Activated B cell treated with CpG ODN at 0.5 μM for 24 hours (primary cell): ENCODE measurements at regions of chr11 and their contacts with region 1.

Region 1: GRCh38 chr11:111446404-111447111 is 65.6 kb downstream of the BTG4 start:
- DNase-seq: peak; percentile 55
- ATAC-seq: peak; percentile 95
- H3K4me3 Mint-ChIP-seq: no peak overlapping the region
- H3K27ac Mint-ChIP-seq: peak overlapping the region; percentile 43
- H3K4me1 Mint-ChIP-seq: peaks cover 36% of the 10 kb centered on the region
- H3K27me3 Mint-ChIP-seq: peaks cover 2% of the 10 kb centered on the region
- CTCF ChIP-seq: no peak

Region 2: DNA sequence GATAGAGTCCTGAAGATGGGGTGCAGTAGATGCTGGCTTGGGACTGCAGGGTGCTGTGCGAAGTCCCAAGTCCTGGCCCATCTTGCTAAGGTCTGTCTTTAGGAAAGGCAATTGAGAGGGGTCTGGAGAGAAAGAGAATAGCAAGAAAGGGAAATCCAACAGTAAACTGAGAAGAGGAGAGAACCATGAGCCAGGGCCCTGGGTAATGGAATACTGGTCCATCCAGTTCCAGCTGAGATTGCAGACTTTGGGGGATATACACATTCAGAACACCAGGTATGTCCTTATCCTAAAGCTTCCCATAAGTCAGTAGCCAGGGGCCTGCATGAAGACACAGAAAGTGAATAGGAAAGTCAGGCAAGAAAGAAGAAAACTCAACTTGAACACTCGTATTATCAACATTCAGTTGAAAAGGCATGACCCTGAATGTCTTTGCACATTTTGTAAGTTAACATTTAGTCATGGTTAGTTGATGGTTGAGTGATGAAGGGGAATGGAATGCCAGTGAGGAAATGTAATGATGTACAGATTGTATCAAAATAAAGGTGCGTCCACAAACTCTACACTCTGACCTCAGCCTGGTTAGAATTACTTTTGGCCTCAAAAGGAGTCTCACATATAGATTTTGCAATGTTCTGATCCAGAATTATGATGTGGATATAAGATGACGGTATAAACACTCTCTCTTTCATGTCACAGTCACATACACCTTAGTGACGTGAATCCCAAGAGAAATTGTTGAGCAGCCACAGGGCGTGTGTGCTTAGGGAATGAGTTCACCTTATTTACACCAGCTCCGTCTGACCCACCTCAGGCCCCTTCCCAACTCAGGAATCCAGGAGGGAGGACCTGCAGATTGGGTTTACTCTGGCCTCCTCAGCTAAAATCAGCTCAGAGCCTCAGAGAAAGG is 1250.5 kb before region 1 on chr11:
- CTCF ChIA-PET with region 1: no interaction called
- POLR2A ChIA-PET with region 1: no interaction called
- intact Hi-C with region 1: loop called (anchors 1 kb)
- DNase-seq: no peak
- ATAC-seq: no peak
- H3K4me3 Mint-ChIP-seq: no peak overlapping the region
- H3K27ac Mint-ChIP-seq: no peak overlapping the region
- H3K4me1 Mint-ChIP-seq: peaks cover 11% of the 10 kb centered on the region
- H3K27me3 Mint-ChIP-seq: peaks cover 23% of the 10 kb centered on the region
- CTCF ChIP-seq: no peak

Region 3: GRCh38 chr11:110434952-110435779 is 1011.4 kb before region 1 on chr11:
- CTCF ChIA-PET with region 1: interaction called, 14 read pairs
- POLR2A ChIA-PET with region 1: no interaction called
- intact Hi-C with region 1: loop called (anchors 1 kb)
- DNase-seq: no peak
- ATAC-seq: no peak
- H3K4me3 Mint-ChIP-seq: no peak overlapping the region
- H3K27ac Mint-ChIP-seq: no peak overlapping the region
- H3K4me1 Mint-ChIP-seq: peaks cover 41% of the 10 kb centered on the region
- H3K27me3 Mint-ChIP-seq: no peaks in the 10 kb centered on the region
- CTCF ChIP-seq: no peak

Region 4: DNA sequence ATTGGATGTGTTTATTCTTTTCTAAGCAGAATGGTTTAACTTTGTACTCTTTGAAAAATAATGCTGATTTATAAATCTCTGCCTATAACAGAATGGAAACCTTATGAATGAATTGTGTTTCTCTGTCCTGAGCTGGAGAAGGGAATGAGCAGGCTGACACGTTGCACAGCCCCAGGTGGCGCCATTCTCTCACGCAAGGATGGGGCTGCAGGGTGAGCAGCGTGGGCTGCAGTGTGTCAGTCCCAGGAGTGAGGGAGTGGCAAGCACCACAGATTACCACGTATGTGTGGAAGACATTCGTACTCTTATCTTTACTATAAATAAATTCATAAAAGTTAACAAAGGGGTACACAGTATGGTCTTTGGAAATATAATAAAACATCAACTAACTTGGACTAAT is 983.4 kb before region 1 on chr11:
- CTCF ChIA-PET with region 1: interaction called, 5 read pairs
- POLR2A ChIA-PET with region 1: no interaction called
- intact Hi-C with region 1: loop called (anchors 1 kb)
- DNase-seq: no peak
- ATAC-seq: peak; percentile 61
- H3K4me3 Mint-ChIP-seq: no peak overlapping the region
- H3K27ac Mint-ChIP-seq: no peak overlapping the region
- H3K4me1 Mint-ChIP-seq: no peaks in the 10 kb centered on the region
- H3K27me3 Mint-ChIP-seq: no peaks in the 10 kb centered on the region
- CTCF ChIP-seq: no peak

Region 5: GRCh38 chr11:111166598-111166997 is 280.0 kb before region 1 on chr11:
- CTCF ChIA-PET with region 1: no interaction called
- POLR2A ChIA-PET with region 1: no interaction called
- intact Hi-C with region 1: no loop called
- DNase-seq: no peak
- ATAC-seq: no peak
- H3K4me3 Mint-ChIP-seq: no peak overlapping the region
- H3K27ac Mint-ChIP-seq: no peak overlapping the region
- H3K4me1 Mint-ChIP-seq: peaks cover 2% of the 10 kb centered on the region
- H3K27me3 Mint-ChIP-seq: no peaks in the 10 kb centered on the region
- CTCF ChIP-seq: no peak

Region 6: GRCh38 chr11:111429066-111429506 is 17.5 kb before region 1 on chr11:
- CTCF ChIA-PET with region 1: interaction called, 42 read pairs
- POLR2A ChIA-PET with region 1: interaction called, 4 read pairs
- intact Hi-C with region 1: loop called (anchors 2 kb)
- DNase-seq: no peak
- ATAC-seq: peak; percentile 91
- H3K4me3 Mint-ChIP-seq: no peak overlapping the region
- H3K27ac Mint-ChIP-seq: no peak overlapping the region
- H3K4me1 Mint-ChIP-seq: peaks cover 4% of the 10 kb centered on the region
- H3K27me3 Mint-ChIP-seq: peaks cover 2% of the 10 kb centered on the region
- CTCF ChIP-seq: no peak